Gastrocnemius medialis (tissue), 4 donors: ENCODE measurements at regions of chr9 and their contacts with region 1.

Region 1: DNA sequence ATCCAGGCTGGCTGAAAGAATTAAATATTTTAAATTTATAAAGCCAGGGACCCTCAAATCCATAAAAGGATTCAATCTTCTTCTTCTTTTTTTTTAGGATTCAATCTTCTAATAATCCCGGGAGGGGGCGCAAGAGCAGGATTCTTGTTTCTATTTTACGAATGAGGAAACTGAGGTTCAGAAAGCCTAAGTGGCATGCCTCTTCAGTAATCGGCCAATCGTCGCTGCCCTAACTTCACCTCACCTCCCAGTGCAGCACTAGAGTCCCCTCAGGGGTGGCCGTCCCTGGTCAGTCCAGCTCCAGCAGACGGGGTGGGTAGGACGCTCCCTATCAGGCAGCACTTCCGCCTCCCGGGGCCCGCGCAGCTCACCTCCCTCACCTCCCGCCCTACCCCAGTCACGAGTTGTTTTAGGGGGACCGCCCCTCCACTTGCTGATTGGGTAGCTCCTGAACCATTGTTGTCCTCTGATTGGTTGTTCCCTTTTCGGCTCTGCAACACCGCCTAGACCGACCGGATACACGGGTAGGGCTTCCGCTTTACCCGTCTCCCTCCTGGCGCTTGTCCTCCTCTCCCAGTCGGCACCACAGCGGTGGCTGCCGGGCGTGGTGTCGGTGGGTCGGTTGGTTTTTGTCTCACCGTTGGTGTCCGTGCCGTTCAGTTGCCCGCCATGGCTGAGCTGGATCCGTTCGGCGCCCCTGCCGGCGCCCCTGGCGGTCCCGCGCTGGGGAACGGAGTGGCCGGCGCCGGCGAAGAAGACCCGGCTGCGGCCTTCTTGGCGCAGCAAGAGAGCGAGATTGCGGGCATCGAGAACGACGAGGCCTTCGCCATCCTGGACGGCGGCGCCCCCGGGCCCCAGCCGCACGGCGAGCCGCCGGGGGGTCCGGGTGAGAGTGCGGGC is at the start of gene CLTA:
- DNase-seq: peak; percentile 98
- ATAC-seq: peak; percentile 98 to 100
- H3K4me3 ChIP-seq: peak within 1 kb of the TSS; percentile 76 to 92 (median 84)
- H3K27ac ChIP-seq: peak within 1 kb of the TSS; percentile 89 to 97 (median 91)
- H3K4me1 ChIP-seq: peaks cover 31 to 36% of the 10 kb centered on the region in 2 donors
- H3K27me3 ChIP-seq: no peaks in the 10 kb centered on the region
- CTCF ChIP-seq: peak; percentile 36 to 58 (median 40)
- POLR2A ChIP-seq: peak; percentile 94 to 96
- total RNA-seq, gene CLTA: 48.4 to 86.7 (median 69.0) TPM

Region 2: GRCh38 chr9:34989003-34989945 is 1201.4 kb before region 1 on chr9 and contains the start of gene DNAJB5:
- in situ Hi-C with region 1: no loop called
- intact Hi-C with region 1: loop called (anchors 5 kb)
- DNase-seq: peak; percentile 99 to 100
- ATAC-seq: peak; percentile 47 to 51
- H3K4me3 ChIP-seq: peak within 1 kb of the TSS; percentile 80 to 91 (median 89)
- H3K27ac ChIP-seq: peak within 1 kb of the TSS in 3 of 4 donors; percentile 85 to 93 (median 89)
- H3K4me1 ChIP-seq: peaks cover 27 to 28% of the 10 kb centered on the region in 2 donors
- H3K27me3 ChIP-seq: no peaks in the 10 kb centered on the region
- CTCF ChIP-seq: no peak
- POLR2A ChIP-seq: no peak
- total RNA-seq, gene DNAJB5: 75.3 to 187 (median 128) TPM

Region 3: DNA sequence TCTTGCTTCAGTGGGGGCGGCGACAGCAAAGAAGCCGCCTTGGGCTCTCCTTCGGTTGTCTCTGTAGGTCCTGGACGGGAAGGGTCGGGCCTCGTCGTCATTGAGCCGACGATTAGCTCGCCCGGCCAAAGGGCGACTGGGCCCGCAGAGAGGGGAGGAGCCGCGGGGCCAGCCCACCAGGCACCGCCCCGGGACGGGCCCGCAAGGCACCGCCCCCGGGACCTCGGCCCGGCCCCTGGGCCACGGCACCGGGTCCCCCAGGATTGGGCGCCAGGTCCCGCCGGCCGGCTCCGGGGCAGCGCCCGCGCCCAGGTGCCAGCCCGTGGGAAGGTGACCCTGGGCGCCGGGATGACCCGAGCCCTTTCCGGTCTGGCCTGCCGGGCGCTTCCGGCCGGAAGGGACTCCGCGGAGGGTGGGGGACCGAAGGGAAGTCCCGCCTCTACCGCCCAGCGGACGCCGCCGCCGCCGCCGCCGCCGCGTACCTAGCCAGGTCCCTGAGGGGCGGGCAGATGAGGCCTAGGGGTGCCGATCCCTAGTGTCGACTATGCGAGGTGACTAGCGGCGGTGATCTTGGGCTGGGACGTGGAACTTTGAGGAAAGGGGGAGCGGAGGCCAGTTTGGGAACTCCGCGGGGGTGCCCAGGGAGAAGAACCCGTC is 441.7 kb before region 1 on chr9 and contains the starts of genes GBA2 and RGP1:
- in situ Hi-C with region 1: no loop called
- intact Hi-C with region 1: no loop called
- DNase-seq: peak; percentile 71 to 87
- ATAC-seq: peak; percentile 81 to 85
- H3K4me3 ChIP-seq: peak within 1 kb of the TSS; percentile 81 to 99 (median 85)
- H3K27ac ChIP-seq: peak within 1 kb of the TSS; percentile 88 to 97 (median 94)
- H3K4me1 ChIP-seq: peaks cover 41 to 45% of the 10 kb centered on the region in 2 donors
- H3K27me3 ChIP-seq: no peaks in the 10 kb centered on the region
- CTCF ChIP-seq: no peak
- POLR2A ChIP-seq: peak; percentile 88 to 95
- total RNA-seq, gene GBA2: 47.3 to 63.2 (median 51.4) TPM
- total RNA-seq, gene RGP1: 22.0 to 41.1 (median 36.3) TPM

Region 4: GRCh38 chr9:36258208-36258988 is 67.8 kb after region 1 on chr9 and contains the start of gene GNE:
- in situ Hi-C with region 1: loop called in 1 of 4 experiments (anchors 10 kb)
- intact Hi-C with region 1: loop called (anchors 1 kb)
- DNase-seq: peak; percentile 97
- ATAC-seq: peak; percentile 95 to 96
- H3K4me3 ChIP-seq: peak within 1 kb of the TSS; percentile 80 to 97 (median 96)
- H3K27ac ChIP-seq: peak within 1 kb of the TSS; percentile 98 to 99 (median 98)
- H3K4me1 ChIP-seq: peaks cover 4 to 5% of the 10 kb centered on the region in 2 donors
- H3K27me3 ChIP-seq: no peaks in the 10 kb centered on the region
- CTCF ChIP-seq: no peak
- POLR2A ChIP-seq: peak; percentile 91 to 92
- total RNA-seq, gene GNE: 11.0 to 18.5 (median 13.9) TPM

Region 5: DNA sequence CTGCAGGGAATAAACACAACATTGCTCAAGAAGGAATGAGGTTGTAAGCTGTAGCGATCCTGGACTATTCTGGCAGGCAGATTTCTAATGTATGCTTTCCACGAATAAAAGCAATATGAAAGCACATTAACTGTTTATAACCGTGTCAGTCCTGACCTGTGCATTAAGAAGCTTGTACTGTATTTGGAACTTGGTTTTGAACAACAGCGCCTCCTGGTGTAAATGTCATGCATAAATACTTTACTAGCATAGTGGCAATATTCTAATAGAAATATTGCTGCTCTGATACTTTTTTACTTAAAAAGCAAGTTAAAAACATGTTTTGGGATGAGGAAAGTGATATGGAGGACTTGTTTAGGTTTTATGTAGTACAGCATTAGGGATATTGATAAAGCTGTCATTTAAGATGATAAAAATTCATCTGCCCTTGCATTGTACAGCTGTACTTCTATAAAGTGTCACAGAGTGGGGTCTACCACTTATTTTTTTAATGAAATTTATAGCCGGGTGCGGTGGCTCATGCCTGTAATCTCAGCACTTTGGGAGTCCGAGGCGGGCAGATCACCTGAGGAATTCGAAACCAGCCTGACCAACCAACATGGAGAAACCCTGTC is 138.3 kb after region 1 on chr9:
- in situ Hi-C with region 1: no loop called
- intact Hi-C with region 1: loop called (anchors 5 kb)
- DNase-seq: no peak
- ATAC-seq: peak; percentile 57 to 82
- H3K4me3 ChIP-seq: no peak overlapping the region
- H3K27ac ChIP-seq: no peak overlapping the region
- H3K4me1 ChIP-seq: peaks cover 4% of the 10 kb centered on the region in 2 donors
- H3K27me3 ChIP-seq: no peaks in the 10 kb centered on the region
- CTCF ChIP-seq: peak; percentile 64 to 81 (median 71)
- POLR2A ChIP-seq: no peak

Region 6: GRCh38 chr9:36400332-36401163 is 209.9 kb after region 1 on chr9:
- in situ Hi-C with region 1: no loop called
- intact Hi-C with region 1: loop called (anchors 2 kb)
- DNase-seq: peak; percentile 81 to 85
- ATAC-seq: peak; percentile 89 to 91
- H3K4me3 ChIP-seq: peak overlapping the region; percentile 73 to 91 (median 80)
- H3K27ac ChIP-seq: peak overlapping the region; percentile 90 to 97 (median 96)
- H3K4me1 ChIP-seq: peaks cover 34 to 44% of the 10 kb centered on the region in 2 donors
- H3K27me3 ChIP-seq: no peaks in the 10 kb centered on the region
- CTCF ChIP-seq: peak in 2 of 5 experiments; percentile 22
- POLR2A ChIP-seq: peak; percentile 57 to 82

Region 7: GRCh38 chr9:36487482-36488388 is 297.1 kb after region 1 on chr9:
- in situ Hi-C with region 1: no loop called
- intact Hi-C with region 1: loop called (anchors 10 kb)
- DNase-seq: peak; percentile 76 to 86
- ATAC-seq: peak; percentile 80 to 90
- H3K4me3 ChIP-seq: peak overlapping the region; percentile 59 to 92 (median 74)
- H3K27ac ChIP-seq: peak overlapping the region; percentile 83 to 96 (median 90)
- H3K4me1 ChIP-seq: peaks cover 17 to 24% of the 10 kb centered on the region in 2 donors
- H3K27me3 ChIP-seq: no peaks in the 10 kb centered on the region
- CTCF ChIP-seq: peak in 3 of 5 experiments; percentile 12 to 25 (median 24)
- POLR2A ChIP-seq: peak; percentile 78 to 89